ENCODE measurements at regions of chr22 and their contacts with region 1.

Region 1: DNA sequence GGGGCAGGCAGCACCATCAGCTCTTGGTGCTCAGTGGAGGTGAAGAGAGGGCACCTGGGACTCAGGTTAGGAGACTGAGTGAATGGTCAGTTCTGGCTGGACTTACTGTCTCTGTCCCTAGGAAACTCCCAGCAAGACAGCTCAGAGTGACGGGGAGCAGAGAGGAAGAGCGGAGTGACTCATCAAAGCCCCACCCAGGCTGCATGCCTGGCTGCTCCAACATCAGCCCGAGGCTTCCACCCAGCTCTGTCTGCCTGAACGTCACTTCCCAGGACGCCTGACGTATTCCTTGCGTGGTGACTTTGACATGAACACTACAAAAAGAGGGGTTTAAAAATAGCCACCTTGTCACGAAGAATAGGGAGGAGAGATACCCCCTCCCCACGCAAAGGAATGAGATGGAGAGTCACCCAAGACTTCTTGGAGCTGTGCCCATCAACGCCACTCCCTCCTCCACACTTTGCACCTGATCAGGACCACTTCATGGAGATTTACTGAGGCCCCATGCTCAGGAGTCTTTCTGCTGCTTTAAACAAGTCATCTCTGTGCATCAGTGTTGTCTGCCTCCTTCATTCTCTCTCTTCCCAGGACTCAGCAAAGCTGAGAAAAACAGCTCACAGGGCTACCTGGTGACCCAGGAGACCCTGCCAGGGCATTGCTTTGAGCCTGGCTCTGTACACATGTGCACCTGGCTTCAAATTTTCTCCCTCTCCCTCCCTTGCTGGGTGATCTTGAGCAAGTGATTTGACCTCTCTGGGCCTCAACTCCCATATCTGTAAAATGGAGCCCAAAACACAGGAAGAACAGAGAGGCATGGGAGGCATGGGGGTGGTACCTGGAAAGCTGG is 83.1 kb downstream of the MN1 start:
- DNase-seq: peak; percentile 84 to 90
- ATAC-seq: peak; percentile 80 to 90 (median 84)
- H3K4me3 ChIP-seq: peak overlapping the region; percentile 20
- H3K27ac ChIP-seq: peak overlapping the region; percentile 81
- H3K4me1 ChIP-seq: peaks cover 25% of the 10 kb centered on the region
- H3K27me3 ChIP-seq: no peaks in the 10 kb centered on the region
- CTCF ChIP-seq: no peak

Region 2: GRCh38 chr22:27405672-27406388 is 312.6 kb before region 1 on chr22:
- intact Hi-C with region 1: no loop called
- DNase-seq: peak; percentile 65 to 78
- ATAC-seq: peak; percentile 83 to 94 (median 88)
- H3K4me3 ChIP-seq: no peak overlapping the region
- H3K27ac ChIP-seq: no peak overlapping the region
- H3K4me1 ChIP-seq: no peaks in the 10 kb centered on the region
- H3K27me3 ChIP-seq: peaks cover 0 to 7% (median 0%) of the 10 kb centered on the region in 3 donors
- CTCF ChIP-seq: peak; percentile 78

Region 3: DNA sequence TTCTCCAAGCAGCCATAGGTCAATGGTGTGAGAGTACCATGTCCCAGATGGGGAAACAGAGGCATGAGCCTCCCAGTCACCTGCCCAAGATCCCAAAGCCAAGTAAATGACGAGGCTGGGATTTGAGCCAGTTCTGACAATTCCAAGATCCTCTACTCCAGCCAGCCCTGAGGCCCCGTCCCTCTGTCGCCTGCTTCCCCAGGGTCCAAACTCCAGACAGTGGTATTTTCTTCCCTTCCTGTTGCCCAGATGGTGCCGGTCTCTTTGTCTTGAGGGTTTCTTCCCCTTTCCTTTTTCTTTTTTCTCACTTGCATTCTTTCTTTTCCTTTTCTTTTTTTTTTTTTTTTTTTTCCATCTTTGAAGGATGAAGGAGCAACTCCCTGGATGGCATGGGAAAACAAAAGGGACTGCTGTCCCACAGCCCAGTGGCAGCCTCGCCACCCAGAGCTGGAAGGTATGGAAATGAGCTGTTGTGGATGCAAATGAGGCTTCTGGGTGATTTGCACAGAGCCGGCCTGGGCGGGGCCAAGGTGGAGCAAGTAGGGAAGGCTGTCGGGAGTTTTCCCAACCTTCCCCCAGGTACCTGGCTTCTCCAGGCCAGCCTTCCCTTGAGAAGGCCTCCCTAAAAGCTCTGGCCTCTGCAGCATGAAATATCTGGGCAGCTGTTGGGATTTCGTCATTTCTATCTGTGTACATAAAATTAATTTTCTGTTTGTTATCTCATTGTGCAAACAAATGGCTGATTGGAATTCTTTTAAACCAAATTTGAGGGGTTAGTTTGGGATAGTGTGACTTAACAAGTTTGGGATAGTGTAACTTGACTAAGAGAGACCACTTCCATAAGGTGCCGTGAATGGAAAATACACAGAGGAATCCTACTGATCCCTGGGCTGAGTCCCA is 63.6 kb before region 1 on chr22:
- intact Hi-C with region 1: loop called in 1 of 2 experiments (anchors 5 kb)
- DNase-seq: no peak
- ATAC-seq: peak in 2 of 4 donors; percentile 15 to 31
- H3K4me3 ChIP-seq: peak overlapping the region; percentile 37
- H3K27ac ChIP-seq: peak overlapping the region; percentile 57
- H3K4me1 ChIP-seq: peaks cover 31% of the 10 kb centered on the region
- H3K27me3 ChIP-seq: no peaks in the 10 kb centered on the region
- CTCF ChIP-seq: no peak

Region 4: GRCh38 chr22:27668828-27669797 is 49.3 kb before region 1 on chr22:
- intact Hi-C with region 1: no loop called
- DNase-seq: peak; percentile 88 to 96
- ATAC-seq: peak; percentile 92 to 98 (median 94)
- H3K4me3 ChIP-seq: peak overlapping the region; percentile 28
- H3K27ac ChIP-seq: peak overlapping the region; percentile 88
- H3K4me1 ChIP-seq: peaks cover 29% of the 10 kb centered on the region
- H3K27me3 ChIP-seq: no peaks in the 10 kb centered on the region
- CTCF ChIP-seq: no peak

Region 5: GRCh38 chr22:27780161-27780575 is 61.8 kb after region 1 on chr22:
- intact Hi-C with region 1: loop called in 1 of 2 experiments (anchors 5 kb)
- DNase-seq: no peak
- ATAC-seq: no peak
- H3K4me3 ChIP-seq: no peak overlapping the region
- H3K27ac ChIP-seq: peak overlapping the region; percentile 94
- H3K4me1 ChIP-seq: peaks cover 49% of the 10 kb centered on the region
- H3K27me3 ChIP-seq: no peaks in the 10 kb centered on the region
- CTCF ChIP-seq: no peak

Region 6: DNA sequence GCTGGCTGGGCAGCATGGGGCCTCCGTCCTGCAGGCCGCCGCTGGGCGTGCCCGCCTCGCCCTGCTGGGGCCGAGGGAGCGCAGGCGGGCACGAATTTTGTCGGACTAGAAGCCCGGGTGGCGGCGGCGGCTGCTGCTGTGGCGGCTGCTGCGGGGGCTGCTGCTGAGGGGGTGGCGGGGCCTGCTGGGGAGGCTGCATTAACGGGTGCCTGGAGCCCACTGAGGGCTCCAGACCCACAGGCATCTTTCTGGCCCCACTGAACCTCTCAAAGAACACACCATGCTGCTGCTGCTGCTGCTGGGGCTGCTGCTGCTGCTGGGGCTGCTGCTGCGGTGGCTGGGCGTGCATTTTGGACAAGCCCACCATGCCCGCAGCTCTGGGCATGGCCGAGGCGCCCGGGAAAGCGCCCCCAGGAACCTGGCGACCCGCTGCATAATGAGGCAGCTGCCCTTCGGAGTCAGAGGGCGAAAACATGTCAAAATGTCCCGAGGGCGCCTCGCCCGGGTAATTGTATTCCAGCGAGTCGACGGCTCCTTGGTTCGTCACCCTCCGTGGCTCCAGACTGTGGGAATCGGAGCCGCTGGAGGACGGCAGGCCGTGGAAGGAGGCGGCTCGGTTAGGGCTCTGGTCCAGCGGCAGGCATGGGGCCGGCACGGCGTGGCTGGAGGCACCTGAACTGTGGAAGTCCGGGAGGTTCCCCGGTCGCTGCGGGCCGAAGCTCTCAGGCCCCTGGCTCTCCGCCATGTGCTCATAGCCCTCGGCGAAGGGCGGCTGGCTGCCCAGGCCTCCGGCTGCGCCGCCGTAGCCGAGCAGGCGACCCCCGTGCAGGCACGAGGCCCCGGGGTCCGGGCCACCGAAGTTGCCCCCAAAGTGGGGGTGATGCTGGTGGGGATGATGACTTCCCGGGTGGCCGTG is 81.2 kb after region 1 on chr22:
- intact Hi-C with region 1: loop called (anchors 5 kb)
- DNase-seq: peak; percentile 53 to 79
- ATAC-seq: peak; percentile 14 to 30 (median 20)
- H3K4me3 ChIP-seq: peak overlapping the region; percentile 95
- H3K27ac ChIP-seq: peak overlapping the region; percentile 94
- H3K4me1 ChIP-seq: peaks cover 44% of the 10 kb centered on the region
- H3K27me3 ChIP-seq: no peaks in the 10 kb centered on the region
- CTCF ChIP-seq: no peak